ENCODE measurements at regions of chr3 and their contacts with region 1.

Region 1: GRCh38 chr3:98522244-98523090 is at the start of gene CLDND1:
- DNase-seq: peak; percentile 91 to 97 (median 92)
- H3K4me3 ChIP-seq: peak within 1 kb of the TSS; percentile 90
- H3K4me3 Mint-ChIP-seq: peak within 1 kb of the TSS; percentile 94 to 99 (median 96)
- H3K27ac ChIP-seq: peak within 1 kb of the TSS; percentile 95
- H3K27ac Mint-ChIP-seq: peak within 1 kb of the TSS; percentile 72 to 99 (median 98)
- H3K4me1 ChIP-seq: peaks cover 41% of the 10 kb centered on the region
- H3K4me1 Mint-ChIP-seq: peaks cover 54 to 82% (median 79%) of the 10 kb centered on the region in 3 donors
- H3K27me3 ChIP-seq: no peaks in the 10 kb centered on the region
- H3K27me3 Mint-ChIP-seq: no peaks in the 10 kb centered on the region
- total RNA-seq, gene CLDND1: 299 to 315 TPM

Region 2: DNA sequence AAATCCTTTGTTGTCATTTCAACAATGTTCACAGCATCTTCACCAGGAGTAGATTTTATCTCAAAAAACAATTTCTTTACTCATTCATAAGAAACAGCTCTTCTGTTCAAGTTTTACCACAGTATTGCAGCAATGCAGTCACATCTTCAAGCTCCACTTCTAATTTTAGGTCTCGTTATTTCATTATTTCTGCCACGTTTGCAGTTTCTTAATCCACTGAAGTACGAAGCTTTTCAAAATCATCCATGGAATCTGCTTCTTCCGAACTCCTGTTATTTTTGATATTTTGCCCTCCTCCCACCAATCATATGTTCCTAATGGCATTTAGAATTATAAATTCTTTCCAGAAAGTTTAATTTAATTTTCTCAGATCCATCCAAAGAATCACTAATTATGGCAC is 72.1 kb before region 1 on chr3:
- CTCF ChIA-PET with region 1: no interaction called
- POLR2A ChIA-PET with region 1: no interaction called
- DNase-seq: no peak
- H3K4me3 ChIP-seq: no peak overlapping the region
- H3K4me3 Mint-ChIP-seq: no peak overlapping the region
- H3K27ac ChIP-seq: no peak overlapping the region
- H3K27ac Mint-ChIP-seq: peak overlapping the region in 1 of 8 donors; percentile 79
- H3K4me1 ChIP-seq: no peaks in the 10 kb centered on the region
- H3K4me1 Mint-ChIP-seq: peaks cover 7 to 13% (median 11%) of the 10 kb centered on the region in 3 donors
- H3K27me3 ChIP-seq: no peaks in the 10 kb centered on the region
- H3K27me3 Mint-ChIP-seq: peaks cover 4 to 5% of the 10 kb centered on the region in 2 donors

Region 3: DNA sequence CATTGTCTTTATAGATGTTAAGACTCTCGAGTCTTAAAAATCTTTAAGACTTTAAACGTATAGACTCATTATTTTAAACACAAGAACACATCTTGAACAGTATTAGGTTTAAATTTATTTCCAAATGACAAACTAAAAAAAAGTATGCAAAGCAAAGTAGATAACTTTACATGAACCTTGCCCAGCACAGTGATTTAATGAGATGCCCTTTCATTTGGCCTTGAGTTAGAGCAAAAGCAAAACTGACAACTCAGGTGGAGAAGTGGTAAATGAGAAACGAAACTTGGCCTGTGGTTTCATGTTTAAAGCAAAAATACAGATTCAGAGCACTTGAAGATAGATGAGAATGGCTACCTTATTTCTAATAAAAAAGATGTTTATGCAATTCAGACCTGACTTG is 17.9 kb after region 1 on chr3:
- CTCF ChIA-PET with region 1: interaction called, 5 read pairs
- POLR2A ChIA-PET with region 1: interaction called, 11 read pairs
- DNase-seq: no peak
- H3K4me3 ChIP-seq: no peak overlapping the region
- H3K4me3 Mint-ChIP-seq: peak overlapping the region in 6 of 7 donors; percentile 17 to 74 (median 49)
- H3K27ac ChIP-seq: no peak overlapping the region
- H3K27ac Mint-ChIP-seq: peak overlapping the region; percentile 17 to 91 (median 74)
- H3K4me1 ChIP-seq: no peaks in the 10 kb centered on the region
- H3K4me1 Mint-ChIP-seq: peaks cover 20 to 68% (median 67%) of the 10 kb centered on the region in 3 donors
- H3K27me3 ChIP-seq: no peaks in the 10 kb centered on the region
- H3K27me3 Mint-ChIP-seq: no peaks in the 10 kb centered on the region

Region 4: DNA sequence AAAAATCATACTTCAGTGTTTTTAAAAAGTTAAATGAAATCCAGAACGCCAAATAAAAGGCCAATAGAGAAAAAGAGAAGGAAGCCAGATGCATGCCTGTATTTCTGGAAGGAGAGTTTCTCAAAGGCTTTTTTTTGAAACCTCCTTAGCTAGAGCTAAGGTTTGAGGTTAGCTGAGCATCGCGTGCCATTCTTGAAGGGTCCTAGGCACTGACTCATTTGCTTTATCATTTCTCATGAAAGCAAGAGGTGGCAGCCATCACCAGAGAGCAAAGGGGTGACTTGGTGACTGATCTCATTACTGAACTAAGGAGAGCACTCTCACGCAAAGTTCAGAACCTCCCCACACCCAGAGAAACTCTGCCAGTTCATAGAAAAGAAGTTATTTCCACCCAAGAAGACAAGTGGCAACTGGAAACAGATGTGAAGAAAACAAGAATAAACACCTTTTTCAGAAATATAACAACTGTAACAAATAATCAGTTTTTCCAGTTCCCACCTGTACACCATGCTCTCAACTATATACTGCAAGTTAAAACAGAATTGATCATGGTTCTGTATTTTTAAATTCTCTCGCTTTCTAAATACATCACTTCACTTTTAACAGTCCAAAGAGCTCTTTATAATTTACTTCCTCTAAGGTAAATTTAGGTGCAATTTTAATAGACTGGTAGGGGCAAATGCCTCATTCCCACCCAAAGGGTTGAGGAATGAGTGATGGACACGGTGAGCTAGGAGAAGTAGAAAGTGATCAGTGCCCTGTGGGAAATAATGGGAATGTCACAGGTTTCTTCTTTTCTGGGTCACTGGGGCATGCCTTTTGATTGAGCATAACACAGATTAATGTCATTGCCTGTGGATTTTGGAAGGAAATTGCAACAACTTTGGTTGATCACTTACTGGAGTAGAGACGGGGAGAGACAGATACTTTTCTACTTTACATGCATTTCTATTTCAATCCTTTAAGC is 34.0 kb after region 1 on chr3:
- CTCF ChIA-PET with region 1: interaction called, 28 read pairs
- POLR2A ChIA-PET with region 1: interaction called, 66 read pairs
- DNase-seq: peak in 3 of 5 donors; percentile 6 to 90 (median 13)
- H3K4me3 ChIP-seq: peak overlapping the region; percentile 24
- H3K4me3 Mint-ChIP-seq: peak overlapping the region; percentile 52 to 80 (median 69)
- H3K27ac ChIP-seq: peak overlapping the region; percentile 52
- H3K27ac Mint-ChIP-seq: peak overlapping the region; percentile 72 to 97 (median 94)
- H3K4me1 ChIP-seq: peaks cover 63% of the 10 kb centered on the region
- H3K4me1 Mint-ChIP-seq: peaks cover 77 to 98% (median 94%) of the 10 kb centered on the region in 3 donors
- H3K27me3 ChIP-seq: no peaks in the 10 kb centered on the region
- H3K27me3 Mint-ChIP-seq: no peaks in the 10 kb centered on the region

Region 5: DNA sequence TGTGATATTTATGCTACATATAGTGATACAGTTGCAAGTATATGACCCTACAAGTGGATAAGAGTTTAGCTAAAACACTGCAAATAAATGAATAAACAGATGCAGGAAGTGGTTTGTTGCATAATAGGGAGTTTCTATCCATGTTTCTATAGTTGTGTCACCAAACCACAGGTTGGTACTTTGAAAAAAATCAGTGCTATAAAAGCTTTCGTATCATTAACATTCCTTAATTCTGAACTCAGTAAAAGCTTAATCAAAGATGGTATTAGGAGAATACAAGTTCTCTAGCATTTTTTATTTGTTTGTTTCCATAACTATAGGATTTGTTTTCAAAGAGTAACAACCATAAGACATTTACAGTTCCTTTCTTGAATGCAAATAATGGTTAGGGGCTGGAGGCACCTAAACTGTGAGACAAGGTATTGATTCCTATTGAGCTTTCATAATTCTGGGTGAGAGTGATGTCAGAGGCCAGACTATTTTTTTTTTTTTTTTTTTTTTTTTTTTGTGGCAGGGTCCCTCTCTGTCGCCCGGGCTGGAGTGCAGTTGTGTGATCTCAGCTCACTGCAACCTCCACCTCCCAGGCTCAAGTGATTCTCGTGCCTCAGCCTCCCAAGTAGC is 41.3 kb after region 1 on chr3:
- CTCF ChIA-PET with region 1: interaction called, 24 read pairs
- POLR2A ChIA-PET with region 1: interaction called, 105 read pairs
- DNase-seq: peak in 4 of 5 donors; percentile 18 to 77 (median 66)
- H3K4me3 ChIP-seq: no peak overlapping the region
- H3K4me3 Mint-ChIP-seq: peak overlapping the region; percentile 61 to 86 (median 80)
- H3K27ac ChIP-seq: peak overlapping the region; percentile 77
- H3K27ac Mint-ChIP-seq: peak overlapping the region; percentile 93 to 99 (median 97)
- H3K4me1 ChIP-seq: peaks cover 72% of the 10 kb centered on the region
- H3K4me1 Mint-ChIP-seq: peaks cover 77 to 98% (median 95%) of the 10 kb centered on the region in 3 donors
- H3K27me3 ChIP-seq: no peaks in the 10 kb centered on the region
- H3K27me3 Mint-ChIP-seq: peaks cover 0 to 2% of the 10 kb centered on the region in 2 donors

Region 6: DNA sequence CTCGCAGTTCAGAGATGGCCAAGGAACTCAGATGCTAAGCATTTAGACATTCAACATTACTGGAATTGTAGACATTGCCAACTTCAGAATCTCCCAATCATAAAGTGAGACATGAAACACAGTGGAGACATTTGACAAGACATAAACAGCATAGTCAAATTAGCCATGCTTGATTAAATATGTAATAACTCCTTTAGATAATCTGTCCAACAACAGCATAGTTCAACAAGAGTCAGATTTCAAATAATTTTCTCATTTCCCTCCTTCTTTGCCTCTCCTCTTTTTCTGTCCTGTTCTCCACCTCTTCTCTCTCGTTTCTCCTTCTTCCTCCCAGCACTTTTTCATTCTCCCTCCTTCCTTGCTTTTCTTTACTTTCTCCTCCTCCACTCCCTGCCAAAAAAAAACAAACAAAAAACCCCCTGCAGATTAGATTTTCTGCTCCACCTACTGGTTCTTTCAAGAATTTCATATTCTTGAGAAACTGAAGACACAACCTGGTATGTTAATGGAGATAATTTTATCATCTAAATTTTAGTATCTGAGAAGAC is 50.8 kb after region 1 on chr3:
- CTCF ChIA-PET with region 1: interaction called, 12 read pairs
- POLR2A ChIA-PET with region 1: interaction called, 17 read pairs
- DNase-seq: peak in 1 of 5 donors; percentile 37
- H3K4me3 ChIP-seq: no peak overlapping the region
- H3K4me3 Mint-ChIP-seq: peak overlapping the region in 5 of 7 donors; percentile 19 to 67 (median 54)
- H3K27ac ChIP-seq: no peak overlapping the region
- H3K27ac Mint-ChIP-seq: peak overlapping the region; percentile 47 to 95 (median 80)
- H3K4me1 ChIP-seq: peaks cover 2% of the 10 kb centered on the region
- H3K4me1 Mint-ChIP-seq: peaks cover 31 to 63% (median 56%) of the 10 kb centered on the region in 3 donors
- H3K27me3 ChIP-seq: no peaks in the 10 kb centered on the region
- H3K27me3 Mint-ChIP-seq: no peaks in the 10 kb centered on the region

Region 7: DNA sequence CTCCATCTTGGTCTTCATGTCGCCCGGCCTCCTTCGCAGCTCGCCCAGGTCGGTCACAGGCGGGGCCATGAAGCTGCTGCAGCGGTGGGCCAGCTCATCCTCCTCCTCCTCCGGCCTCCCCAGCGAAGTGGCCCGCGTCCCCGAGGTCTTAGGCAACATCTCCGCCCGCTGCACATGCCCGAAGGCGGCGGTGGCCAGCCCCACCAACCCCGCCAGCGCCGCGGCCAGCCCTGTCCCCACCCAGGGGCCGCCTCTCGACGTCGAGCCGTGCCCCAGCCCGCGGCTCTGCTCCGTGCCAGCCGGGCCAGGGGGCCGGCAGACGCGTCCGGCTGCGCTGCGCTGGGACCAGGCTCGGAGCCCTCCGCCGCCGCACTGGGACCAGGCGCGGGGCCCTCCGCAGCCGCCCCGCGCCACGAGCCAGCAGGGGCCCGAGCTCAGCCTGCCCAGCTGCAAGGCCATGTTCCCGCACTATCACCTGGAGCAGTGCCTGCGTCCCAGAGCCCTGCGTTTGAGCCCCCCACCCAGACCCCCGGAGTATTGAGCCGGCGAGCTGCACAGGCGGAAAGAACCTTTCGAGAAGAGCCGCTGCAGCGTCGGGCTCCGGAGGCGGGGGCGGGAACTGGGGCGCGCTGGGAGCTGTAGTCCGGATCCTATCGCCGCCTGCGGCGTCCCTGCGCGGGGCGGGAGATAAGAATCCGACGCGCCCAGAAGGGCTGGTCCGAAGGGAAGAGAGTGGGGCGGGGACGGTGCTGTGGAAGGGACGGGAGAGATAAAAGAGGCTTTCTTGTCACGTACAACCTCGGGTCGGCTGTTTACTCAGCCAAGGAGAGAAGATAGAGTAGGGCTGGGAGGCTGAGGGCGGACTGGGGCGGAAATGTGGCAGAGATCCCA is 70.8 kb after region 1 on chr3 and contains the start of gene CPOX:
- CTCF ChIA-PET with region 1: interaction called, 4 read pairs
- POLR2A ChIA-PET with region 1: interaction called, 15 read pairs
- DNase-seq: peak; percentile 72 to 87 (median 75)
- H3K4me3 ChIP-seq: peak within 1 kb of the TSS; percentile 73
- H3K4me3 Mint-ChIP-seq: peak within 1 kb of the TSS; percentile 89 to 99 (median 97)
- H3K27ac ChIP-seq: peak within 1 kb of the TSS; percentile 53
- H3K27ac Mint-ChIP-seq: peak within 1 kb of the TSS; percentile 65 to 99 (median 94)
- H3K4me1 ChIP-seq: peaks cover 17% of the 10 kb centered on the region
- H3K4me1 Mint-ChIP-seq: peaks cover 33 to 55% (median 49%) of the 10 kb centered on the region in 3 donors
- H3K27me3 ChIP-seq: no peaks in the 10 kb centered on the region
- H3K27me3 Mint-ChIP-seq: no peaks in the 10 kb centered on the region
- total RNA-seq, gene CPOX: 76.3 to 79.9 TPM

Region 8: GRCh38 chr3:98893740-98894139 is 371.3 kb after region 1 on chr3:
- CTCF ChIA-PET with region 1: no interaction called
- POLR2A ChIA-PET with region 1: no interaction called
- DNase-seq: no peak
- H3K4me3 ChIP-seq: no peak overlapping the region
- H3K4me3 Mint-ChIP-seq: no peak overlapping the region
- H3K27ac ChIP-seq: no peak overlapping the region
- H3K27ac Mint-ChIP-seq: no peak overlapping the region
- H3K4me1 ChIP-seq: no peaks in the 10 kb centered on the region
- H3K4me1 Mint-ChIP-seq: no peaks in the 10 kb centered on the region
- H3K27me3 ChIP-seq: no peaks in the 10 kb centered on the region
- H3K27me3 Mint-ChIP-seq: peaks cover 0 to 2% of the 10 kb centered on the region in 2 donors